ENCODE measurements at regions of chr20 and their contacts with region 1.

Region 1: GRCh38 chr20:53959911-53960578 is 110.3 kb downstream of the BCAS1 start:
- DNase-seq: no peak
- H3K4me3 ChIP-seq: no peak overlapping the region
- H3K27ac ChIP-seq: no peak overlapping the region
- H3K4me1 ChIP-seq: peaks cover 10% of the 10 kb centered on the region
- H3K27me3 ChIP-seq: peaks cover 3 to 7% of the 10 kb centered on the region in 2 experiments
- CTCF ChIP-seq: no peak
- POLR2A ChIP-seq: no peak

Region 2: DNA sequence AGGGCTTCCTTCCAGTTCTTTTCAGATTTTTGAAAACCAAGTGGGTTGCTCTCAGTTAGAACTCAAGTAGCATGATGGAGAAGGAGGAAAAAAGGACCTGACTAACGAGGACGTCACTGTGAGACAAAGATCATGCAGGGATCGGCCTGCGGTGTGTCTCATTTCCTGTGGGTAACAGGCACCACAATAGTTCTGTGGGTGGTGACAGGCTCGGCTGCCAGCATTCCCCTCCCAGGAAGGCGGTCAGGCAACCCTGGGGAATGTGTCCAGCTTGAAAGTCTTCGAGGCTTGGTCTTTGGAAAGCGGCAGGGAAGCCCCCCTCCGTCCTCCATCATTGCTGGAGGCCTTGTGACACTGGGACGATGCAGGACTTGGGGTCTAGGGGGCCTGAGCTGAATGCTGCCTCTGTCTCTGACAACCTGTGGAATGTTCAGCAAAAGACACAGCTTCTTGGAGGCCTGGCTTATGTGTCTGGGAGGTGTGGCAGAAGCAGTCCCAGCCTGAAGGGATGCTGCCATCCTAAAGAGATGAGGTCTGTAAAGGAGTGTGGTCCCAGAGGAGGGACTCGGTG is 10.6 kb before region 1 on chr20:
- CTCF ChIA-PET with region 1: interaction called, 10 read pairs
- POLR2A ChIA-PET with region 1: interaction called, 3 read pairs
- dilution Hi-C with region 1: no loop called
- intact Hi-C with region 1: no loop called
- DNase-seq: peak; percentile 63
- H3K4me3 ChIP-seq: no peak overlapping the region
- H3K27ac ChIP-seq: peak overlapping the region; percentile 52
- H3K4me1 ChIP-seq: peaks cover 14% of the 10 kb centered on the region
- H3K27me3 ChIP-seq: no peaks in the 10 kb centered on the region
- CTCF ChIP-seq: no peak
- POLR2A ChIP-seq: no peak

Measured in endothelial cell of umbilical vein (primary cell).